ENCODE measurements at regions of chr16 and their contacts with region 1.

Region 1: DNA sequence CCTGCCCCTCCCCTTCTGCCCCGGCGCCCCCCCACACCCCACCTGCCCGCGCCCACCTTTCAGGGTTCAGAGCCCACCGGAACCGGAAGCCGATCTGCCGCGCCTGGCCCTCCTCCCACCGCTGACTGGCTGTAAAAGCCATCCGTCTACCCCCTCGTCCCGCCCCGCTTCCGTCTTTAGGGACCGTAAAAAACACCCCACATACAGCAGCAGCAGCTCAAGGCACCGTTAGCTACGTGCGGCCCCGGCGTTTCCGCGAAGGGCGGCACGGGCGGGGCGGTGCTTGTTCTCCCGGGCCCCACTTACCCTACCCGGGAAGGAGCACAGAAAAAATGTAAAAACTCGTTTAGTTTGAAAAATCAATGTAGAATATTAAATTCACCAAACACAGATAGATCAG is at the start of gene MRPL28:
- DNase-seq: peak; percentile 75 to 93 (median 92)
- ATAC-seq: peak; percentile 99
- H3K4me3 ChIP-seq: peak within 1 kb of the TSS; percentile 30
- H3K4me3 Mint-ChIP-seq: peak within 1 kb of the TSS; percentile 81 to 97 (median 90)
- H3K27ac ChIP-seq: peak within 1 kb of the TSS; percentile 67
- H3K27ac Mint-ChIP-seq: peak within 1 kb of the TSS; percentile 80 to 96 (median 89)
- H3K4me1 ChIP-seq: peaks cover 10 to 14% of the 10 kb centered on the region in 2 donors
- H3K4me1 Mint-ChIP-seq: peaks cover 4 to 26% (median 13%) of the 10 kb centered on the region in 7 donors
- H3K27me3 ChIP-seq: no peaks in the 10 kb centered on the region
- H3K27me3 Mint-ChIP-seq: no peaks in the 10 kb centered on the region
- total RNA-seq, gene MRPL28: 21.9 to 86.2 (median 26.5) TPM

Region 2: GRCh38 chr16:138049-138417 is 232.4 kb before region 1 on chr16:
- CTCF ChIA-PET with region 1: no interaction called
- POLR2A ChIA-PET with region 1: no interaction called
- intact Hi-C with region 1: loop called in 1 of 2 experiments (anchors 5 kb)
- DNase-seq: peak in 7 of 9 donors; percentile 10 to 55 (median 23)
- ATAC-seq: peak; percentile 24
- H3K4me3 ChIP-seq: peak overlapping the region; percentile 58
- H3K4me3 Mint-ChIP-seq: peak overlapping the region; percentile 74 to 90 (median 84)
- H3K27ac ChIP-seq: peak overlapping the region; percentile 68
- H3K27ac Mint-ChIP-seq: peak overlapping the region in 7 of 9 donors; percentile 11 to 94 (median 75)
- H3K4me1 ChIP-seq: peaks cover 6% of the 10 kb centered on the region in 2 donors
- H3K4me1 Mint-ChIP-seq: peaks cover 9 to 47% (median 26%) of the 10 kb centered on the region in 7 donors
- H3K27me3 ChIP-seq: no peaks in the 10 kb centered on the region
- H3K27me3 Mint-ChIP-seq: peaks cover 0 to 6% (median 0%) of the 10 kb centered on the region in 5 donors

Region 3: DNA sequence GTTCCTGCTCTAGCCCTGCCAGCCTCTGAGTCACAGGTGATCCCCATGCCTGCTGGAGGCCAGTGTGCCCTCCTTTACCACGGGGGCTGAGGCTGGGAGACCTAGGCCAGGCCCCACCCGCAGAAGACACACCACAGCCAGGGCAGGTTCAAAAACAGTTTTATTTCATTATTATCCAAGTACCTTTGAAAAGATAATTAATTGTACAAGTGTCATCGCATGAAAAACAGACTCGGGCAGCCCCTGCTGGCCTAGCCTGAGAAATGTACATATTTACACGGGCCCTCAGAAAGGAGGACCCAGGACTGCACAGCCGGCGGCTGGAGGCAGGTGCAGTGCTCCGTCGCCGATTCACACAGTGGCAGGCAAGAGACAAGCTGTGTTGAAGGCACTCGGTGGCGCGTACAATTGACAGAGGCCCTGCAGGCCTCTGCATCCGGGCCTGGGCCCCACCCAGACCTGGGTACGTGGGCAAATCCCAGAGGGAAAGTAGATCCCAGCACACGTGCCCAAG is 83.1 kb before region 1 on chr16:
- CTCF ChIA-PET with region 1: no interaction called
- POLR2A ChIA-PET with region 1: no interaction called
- intact Hi-C with region 1: no loop called
- DNase-seq: no peak
- ATAC-seq: no peak
- H3K4me3 ChIP-seq: no peak overlapping the region
- H3K4me3 Mint-ChIP-seq: no peak overlapping the region
- H3K27ac ChIP-seq: no peak overlapping the region
- H3K27ac Mint-ChIP-seq: no peak overlapping the region
- H3K4me1 ChIP-seq: no peaks in the 10 kb centered on the region
- H3K4me1 Mint-ChIP-seq: no peaks in the 10 kb centered on the region
- H3K27me3 ChIP-seq: no peaks in the 10 kb centered on the region
- H3K27me3 Mint-ChIP-seq: peaks cover 0 to 4% (median 0%) of the 10 kb centered on the region in 5 donors

Region 4: GRCh38 chr16:345772-346171 is 24.7 kb before region 1 on chr16:
- CTCF ChIA-PET with region 1: no interaction called
- POLR2A ChIA-PET with region 1: no interaction called
- intact Hi-C with region 1: no loop called
- DNase-seq: no peak
- ATAC-seq: no peak
- H3K4me3 ChIP-seq: no peak overlapping the region
- H3K4me3 Mint-ChIP-seq: peak overlapping the region in 1 of 10 donors; percentile 19
- H3K27ac ChIP-seq: no peak overlapping the region
- H3K27ac Mint-ChIP-seq: peak overlapping the region in 2 of 9 donors; percentile 8 to 18
- H3K4me1 ChIP-seq: peaks cover 26 to 29% of the 10 kb centered on the region in 2 donors
- H3K4me1 Mint-ChIP-seq: peaks cover 47 to 86% (median 78%) of the 10 kb centered on the region in 7 donors
- H3K27me3 ChIP-seq: no peaks in the 10 kb centered on the region
- H3K27me3 Mint-ChIP-seq: no peaks in the 10 kb centered on the region

Region 5: DNA sequence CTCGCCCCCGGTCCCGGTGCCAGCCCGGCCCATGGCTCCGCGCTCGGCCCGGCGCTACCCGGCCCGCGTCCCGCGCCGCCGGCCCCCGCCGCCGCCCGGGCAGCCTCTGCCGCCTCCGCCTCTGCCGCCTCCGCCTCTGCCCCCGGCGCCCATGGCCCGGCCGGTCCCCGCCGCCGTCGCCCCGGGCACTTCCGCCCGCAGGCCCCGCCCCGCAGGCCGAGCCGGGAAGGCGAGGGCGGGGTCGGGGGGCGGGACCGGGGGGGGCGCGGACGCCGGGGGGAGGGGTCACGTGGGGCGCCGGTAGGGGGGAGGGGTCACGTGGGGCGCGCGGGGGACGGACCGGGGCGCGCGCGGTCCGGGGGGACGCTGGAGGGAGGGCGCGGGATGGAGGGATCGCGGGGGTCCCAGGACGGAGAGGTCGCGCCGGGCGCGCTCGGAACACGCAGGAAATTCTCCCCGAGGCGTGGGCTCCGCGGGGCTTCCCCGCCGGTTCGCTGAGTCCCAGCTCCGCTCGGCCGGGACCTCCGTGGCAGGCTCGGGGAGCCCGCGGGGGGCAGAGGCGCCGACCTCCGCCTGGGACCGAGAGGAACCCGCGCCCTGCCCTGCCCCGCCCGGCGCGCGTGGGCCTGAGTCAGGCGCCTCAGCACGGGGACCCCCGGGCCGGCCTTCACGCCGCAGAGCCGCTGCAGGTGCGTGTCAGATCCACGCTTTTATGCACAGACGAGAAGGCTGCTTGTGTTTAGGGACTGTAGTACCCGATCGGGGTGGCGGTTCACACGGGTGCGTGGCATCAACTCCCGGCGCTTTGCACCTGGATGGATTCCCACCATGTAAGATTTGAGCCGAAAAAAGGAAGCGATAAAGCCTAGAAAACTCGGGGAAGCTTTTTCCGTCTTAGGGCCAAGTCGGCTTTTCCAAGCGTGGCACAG is 11.6 kb after region 1 on chr16 and contains the start of gene PGAP6:
- CTCF ChIA-PET with region 1: interaction called, 10 read pairs
- POLR2A ChIA-PET with region 1: interaction called, 59 read pairs
- intact Hi-C with region 1: loop called (anchors 1 kb)
- DNase-seq: peak; percentile 36 to 83 (median 51)
- ATAC-seq: peak; percentile 83
- H3K4me3 ChIP-seq: peak within 1 kb of the TSS; percentile 79
- H3K4me3 Mint-ChIP-seq: peak within 1 kb of the TSS; percentile 85 to 97 (median 90)
- H3K27ac ChIP-seq: peak within 1 kb of the TSS; percentile 81
- H3K27ac Mint-ChIP-seq: peak within 1 kb of the TSS; percentile 58 to 98 (median 90)
- H3K4me1 ChIP-seq: peaks cover 18 to 23% of the 10 kb centered on the region in 2 donors
- H3K4me1 Mint-ChIP-seq: peaks cover 7 to 32% (median 21%) of the 10 kb centered on the region in 7 donors
- H3K27me3 ChIP-seq: no peaks in the 10 kb centered on the region
- H3K27me3 Mint-ChIP-seq: peaks cover 0 to 11% (median 0%) of the 10 kb centered on the region in 5 donors
- total RNA-seq, gene PGAP6: 32.2 to 107 (median 89.4) TPM

Region 6: DNA sequence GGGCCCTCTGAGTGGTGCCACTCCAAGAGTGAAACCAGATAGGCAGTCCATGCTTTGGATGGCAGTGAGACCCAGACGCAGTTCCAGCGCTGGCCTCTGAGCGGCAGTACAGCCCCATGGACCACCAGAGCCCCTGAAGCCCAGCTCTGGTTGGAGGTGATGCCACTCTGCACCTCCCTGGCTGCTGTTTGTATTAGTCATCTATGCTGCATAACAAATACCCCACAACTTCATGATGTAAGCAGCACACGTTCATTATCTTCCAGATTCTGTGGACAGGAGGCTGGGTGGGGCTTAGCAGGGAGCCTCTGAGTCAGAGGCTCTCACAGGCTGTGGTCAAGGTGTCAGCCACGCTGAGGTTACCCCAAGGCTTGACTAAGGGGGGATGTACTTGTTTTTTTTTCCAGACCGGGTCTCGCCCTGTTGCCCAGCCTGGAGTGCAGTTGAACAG is 21.5 kb after region 1 on chr16:
- CTCF ChIA-PET with region 1: no interaction called
- POLR2A ChIA-PET with region 1: no interaction called
- intact Hi-C with region 1: loop called in 1 of 2 experiments (anchors 1 kb)
- DNase-seq: peak; percentile 47 to 71 (median 67)
- ATAC-seq: peak; percentile 92
- H3K4me3 ChIP-seq: no peak overlapping the region
- H3K4me3 Mint-ChIP-seq: no peak overlapping the region
- H3K27ac ChIP-seq: no peak overlapping the region
- H3K27ac Mint-ChIP-seq: peak overlapping the region in 5 of 9 donors; percentile 33 to 81 (median 71)
- H3K4me1 ChIP-seq: peaks cover 4 to 6% of the 10 kb centered on the region in 2 donors
- H3K4me1 Mint-ChIP-seq: peaks cover 6 to 28% (median 12%) of the 10 kb centered on the region in 7 donors
- H3K27me3 ChIP-seq: no peaks in the 10 kb centered on the region
- H3K27me3 Mint-ChIP-seq: peaks cover 0 to 12% (median 0%) of the 10 kb centered on the region in 5 donors

Region 7: GRCh38 chr16:527006-527753 is 156.7 kb after region 1 on chr16 and contains the start of gene CAPN15:
- CTCF ChIA-PET with region 1: no interaction called
- POLR2A ChIA-PET with region 1: no interaction called
- intact Hi-C with region 1: loop called in 1 of 2 experiments (anchors 5 kb)
- DNase-seq: peak; percentile 79 to 93 (median 89)
- ATAC-seq: peak; percentile 91
- H3K4me3 ChIP-seq: peak within 1 kb of the TSS; percentile 78
- H3K4me3 Mint-ChIP-seq: peak within 1 kb of the TSS; percentile 83 to 93 (median 88)
- H3K27ac ChIP-seq: peak within 1 kb of the TSS; percentile 97
- H3K27ac Mint-ChIP-seq: peak within 1 kb of the TSS; percentile 68 to 93 (median 83)
- H3K4me1 ChIP-seq: peaks cover 26 to 28% of the 10 kb centered on the region in 2 donors
- H3K4me1 Mint-ChIP-seq: peaks cover 21 to 38% (median 30%) of the 10 kb centered on the region in 7 donors
- H3K27me3 ChIP-seq: no peaks in the 10 kb centered on the region
- H3K27me3 Mint-ChIP-seq: no peaks in the 10 kb centered on the region
- total RNA-seq, gene CAPN15: 51.0 to 89.8 (median 55.6) TPM

Region 8: DNA sequence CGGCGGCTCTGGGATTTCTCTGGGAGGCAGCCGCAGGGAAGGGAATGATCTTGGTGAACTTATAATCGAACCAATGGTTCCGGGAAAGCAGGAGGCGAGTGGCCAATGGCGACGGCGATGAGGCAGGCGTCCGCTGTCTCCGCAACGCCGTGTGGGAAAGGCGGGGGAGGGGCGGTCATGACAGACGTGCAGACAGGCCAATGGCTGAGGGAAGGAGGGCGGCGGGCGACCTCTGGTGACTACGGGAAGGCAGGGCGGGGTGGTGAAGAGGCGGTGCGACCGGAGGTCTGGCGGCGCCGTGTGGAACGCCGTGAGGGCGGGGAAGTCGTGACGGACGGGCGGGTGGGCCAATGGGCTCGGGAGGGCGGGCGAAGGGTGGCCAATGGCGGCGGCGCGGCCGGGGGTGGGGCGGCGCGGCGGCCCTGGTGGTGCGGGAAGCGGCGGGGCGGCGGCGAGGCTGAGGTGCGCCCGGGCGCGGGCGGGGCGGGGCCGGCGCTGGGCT is 219.3 kb after region 1 on chr16 and contains the start of gene RAB40C:
- CTCF ChIA-PET with region 1: no interaction called
- POLR2A ChIA-PET with region 1: no interaction called
- intact Hi-C with region 1: no loop called
- DNase-seq: peak; percentile 96 to 99 (median 99)
- ATAC-seq: peak; percentile 91
- H3K4me3 ChIP-seq: peak within 1 kb of the TSS; percentile 93
- H3K4me3 Mint-ChIP-seq: peak within 1 kb of the TSS; percentile 86 to 100 (median 98)
- H3K27ac ChIP-seq: peak within 1 kb of the TSS; percentile 93
- H3K27ac Mint-ChIP-seq: peak within 1 kb of the TSS; percentile 95 to 100 (median 99)
- H3K4me1 ChIP-seq: peaks cover 15 to 17% of the 10 kb centered on the region in 2 donors
- H3K4me1 Mint-ChIP-seq: peaks cover 25 to 50% (median 45%) of the 10 kb centered on the region in 7 donors
- H3K27me3 ChIP-seq: no peaks in the 10 kb centered on the region
- H3K27me3 Mint-ChIP-seq: no peaks in the 10 kb centered on the region
- total RNA-seq, gene RAB40C: 15.8 to 23.2 (median 17.8) TPM

Measured in naive thymus-derived CD4-positive, alpha-beta T cell (primary cell).